MCF 10A (cell line): ENCODE measurements at regions of chr13 and their contacts with region 1.

Region 1: DNA sequence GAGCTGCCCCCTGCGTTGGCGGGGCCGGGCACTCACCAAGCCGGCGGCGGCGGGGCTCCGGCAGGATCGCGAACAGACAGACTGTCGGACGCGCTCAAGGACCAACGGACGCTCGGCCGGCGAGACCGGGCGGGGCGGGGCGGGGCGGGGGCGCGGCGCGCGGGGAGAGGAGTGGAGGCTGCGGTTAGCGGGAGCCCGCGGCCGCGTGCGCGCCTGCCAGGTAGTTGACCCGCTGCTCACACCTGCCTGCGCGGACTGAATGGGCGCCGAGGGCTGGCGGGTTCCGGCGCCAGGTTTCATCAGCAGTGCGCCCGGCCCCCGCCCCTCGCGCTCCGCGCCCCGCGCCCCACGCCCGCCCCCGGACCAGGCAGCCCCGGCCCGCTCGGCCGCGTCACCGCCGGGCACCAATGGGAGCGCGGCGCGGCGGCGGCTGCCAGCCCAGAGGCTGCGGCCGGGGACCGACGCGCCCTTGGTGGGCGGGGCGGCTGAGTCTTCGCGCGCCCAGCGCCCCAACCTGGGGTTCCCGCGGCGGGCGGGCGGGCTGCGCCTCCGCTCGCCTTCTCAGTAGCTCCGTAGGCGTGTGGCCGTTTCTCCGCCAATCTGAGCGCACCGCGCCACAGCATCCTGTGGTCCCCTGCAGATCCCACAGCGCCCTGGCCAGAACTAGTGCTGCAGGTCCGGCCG is at the start of gene SLC7A1:
- DNase-seq: peak; percentile 83
- H3K4me3 Mint-ChIP-seq: peak within 1 kb of the TSS; percentile 86
- H3K27ac Mint-ChIP-seq: peak within 1 kb of the TSS; percentile 94
- H3K4me1 Mint-ChIP-seq: peaks cover 32% of the 10 kb centered on the region
- H3K27me3 Mint-ChIP-seq: no peaks in the 10 kb centered on the region
- CTCF ChIP-seq: no peak
- total RNA-seq, gene SLC7A1: 154 and 194 TPM in 2 replicates

Region 2: DNA sequence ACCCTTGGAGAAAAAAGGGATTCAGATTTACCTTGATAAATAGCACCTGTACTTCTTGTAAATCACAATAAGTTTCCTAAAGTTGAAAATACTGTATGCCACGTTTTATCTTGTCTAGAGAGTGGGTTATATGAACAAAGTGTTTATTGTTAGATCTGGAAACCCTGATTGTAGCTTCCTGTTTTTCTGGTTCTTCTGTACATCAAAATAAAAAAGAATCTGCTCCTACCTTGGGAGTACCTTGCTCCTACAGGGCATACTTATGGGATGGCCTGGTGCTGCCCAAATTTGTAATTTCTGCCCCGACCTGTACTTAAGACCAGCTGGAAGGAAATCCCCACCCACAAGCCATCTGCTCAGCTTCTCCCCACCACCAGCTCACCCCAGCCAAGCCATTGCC is 241.1 kb before region 1 on chr13:
- CTCF ChIA-PET with region 1: no interaction called
- POLR2A ChIA-PET with region 1: no interaction called
- intact Hi-C with region 1: no loop called
- DNase-seq: no peak
- H3K4me3 Mint-ChIP-seq: no peak overlapping the region
- H3K27ac Mint-ChIP-seq: no peak overlapping the region
- H3K4me1 Mint-ChIP-seq: no peaks in the 10 kb centered on the region
- H3K27me3 Mint-ChIP-seq: peaks cover 74% of the 10 kb centered on the region
- CTCF ChIP-seq: no peak

Region 3: DNA sequence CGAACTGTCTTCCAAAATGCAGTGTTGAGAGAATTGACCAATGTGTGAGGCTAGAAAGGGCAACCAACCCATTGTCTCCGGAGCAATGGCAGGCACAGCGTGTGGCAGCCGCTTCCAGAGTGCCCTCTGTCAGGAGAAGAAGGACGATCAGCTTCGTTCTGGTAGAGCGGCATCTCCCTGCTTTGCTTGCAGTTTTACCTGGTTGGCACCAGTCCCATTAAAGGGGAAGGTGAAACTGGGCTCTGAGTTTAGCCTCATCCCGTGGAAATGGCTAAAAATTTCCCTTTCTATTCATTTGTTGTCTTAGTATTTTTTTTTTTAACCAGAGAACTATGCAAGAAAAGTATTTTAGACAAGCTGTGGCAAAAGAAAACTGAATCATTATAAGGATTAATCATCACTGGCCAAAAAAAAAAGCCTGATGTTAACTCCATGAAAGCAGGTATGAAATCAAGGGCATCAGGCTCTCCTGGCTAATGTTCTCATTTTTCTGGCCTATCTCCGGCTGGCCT is 81.5 kb after region 1 on chr13:
- CTCF ChIA-PET with region 1: interaction called, 4 read pairs
- POLR2A ChIA-PET with region 1: interaction called, 6 read pairs
- intact Hi-C with region 1: loop called (anchors 5 kb)
- DNase-seq: peak; percentile 55
- H3K4me3 Mint-ChIP-seq: peak overlapping the region; percentile 64
- H3K27ac Mint-ChIP-seq: peak overlapping the region; percentile 31
- H3K4me1 Mint-ChIP-seq: peaks cover 15% of the 10 kb centered on the region
- H3K27me3 Mint-ChIP-seq: peaks cover 9% of the 10 kb centered on the region
- CTCF ChIP-seq: no peak

Region 4: GRCh38 chr13:29707876-29708543 is 112.5 kb after region 1 on chr13:
- CTCF ChIA-PET with region 1: no interaction called
- POLR2A ChIA-PET with region 1: interaction called, 3 read pairs
- intact Hi-C with region 1: loop called (anchors 10 kb)
- DNase-seq: peak; percentile 62
- H3K4me3 Mint-ChIP-seq: no peak overlapping the region
- H3K27ac Mint-ChIP-seq: no peak overlapping the region
- H3K4me1 Mint-ChIP-seq: peaks cover 6% of the 10 kb centered on the region
- H3K27me3 Mint-ChIP-seq: peaks cover 41% of the 10 kb centered on the region
- CTCF ChIP-seq: peak; percentile 78